Ascending aorta (tissue), 2 donors: ENCODE measurements at regions of chr1 and their contacts with region 1.

Region 1: GRCh38 chr1:236281654-236282424 is at the start of gene ERO1B:
- DNase-seq: peak; percentile 94 to 99
- H3K4me3 ChIP-seq: peak within 1 kb of the TSS; percentile 80 to 98
- H3K27ac ChIP-seq: peak within 1 kb of the TSS; percentile 71 to 89
- H3K4me1 ChIP-seq: peaks cover 0 to 4% of the 10 kb centered on the region in 2 donors
- H3K27me3 ChIP-seq: no peaks in the 10 kb centered on the region
- CTCF ChIP-seq: no peak
- total RNA-seq, gene ERO1B: 5.1 TPM

Region 2: GRCh38 chr1:235045034-235045720 is 1236.7 kb before region 1 on chr1:
- intact Hi-C with region 1: no loop called
- DNase-seq: no peak
- H3K4me3 ChIP-seq: no peak overlapping the region
- H3K27ac ChIP-seq: no peak overlapping the region
- H3K4me1 ChIP-seq: peaks cover 9 to 28% of the 10 kb centered on the region in 2 donors
- H3K27me3 ChIP-seq: no peaks in the 10 kb centered on the region
- CTCF ChIP-seq: no peak

Region 3: GRCh38 chr1:236064674-236065508 is 216.9 kb before region 1 on chr1 and contains the start of gene NID1:
- intact Hi-C with region 1: loop called (anchors 2 kb)
- DNase-seq: peak; percentile 56 to 92
- H3K4me3 ChIP-seq: peak within 1 kb of the TSS; percentile 77 to 81
- H3K27ac ChIP-seq: peak within 1 kb of the TSS; percentile 91 to 95
- H3K4me1 ChIP-seq: peaks cover 0 to 15% of the 10 kb centered on the region in 2 donors
- H3K27me3 ChIP-seq: no peaks in the 10 kb centered on the region
- CTCF ChIP-seq: peak; percentile 35 to 48 (median 38)
- total RNA-seq, gene NID1: 172 TPM

Region 4: GRCh38 chr1:236523701-236524141 is 241.9 kb after region 1 on chr1 and contains the start of gene LGALS8:
- intact Hi-C with region 1: loop called (anchors 2 kb)
- DNase-seq: peak; percentile 72 to 95
- H3K4me3 ChIP-seq: peak within 1 kb of the TSS; percentile 68 to 78
- H3K27ac ChIP-seq: peak within 1 kb of the TSS; percentile 77 to 88
- H3K4me1 ChIP-seq: peaks cover 0 to 6% of the 10 kb centered on the region in 2 donors
- H3K27me3 ChIP-seq: no peaks in the 10 kb centered on the region
- CTCF ChIP-seq: no peak
- total RNA-seq, gene LGALS8: 45.8 TPM

Region 5: GRCh38 chr1:236795035-236795756 is 513.4 kb after region 1 on chr1 and contains the start of gene MTR:
- intact Hi-C with region 1: loop called (anchors 5 kb)
- DNase-seq: peak; percentile 95 to 99
- H3K4me3 ChIP-seq: peak within 1 kb of the TSS; percentile 89 to 96
- H3K27ac ChIP-seq: peak within 1 kb of the TSS; percentile 92 to 97
- H3K4me1 ChIP-seq: peaks cover 0 to 25% of the 10 kb centered on the region in 2 donors
- H3K27me3 ChIP-seq: no peaks in the 10 kb centered on the region
- CTCF ChIP-seq: no peak
- total RNA-seq, gene MTR: 36.1 TPM